CD14-positive monocyte (primary cell): ENCODE measurements at regions of chr11 and their contacts with region 1.

Region 1: GRCh38 chr11:61129639-61130523 is 27.6 kb downstream of the CD5 start:
- DNase-seq: peak; percentile 82 to 89 (median 88)
- H3K4me3 ChIP-seq: peak overlapping the region in 1 of 3 experiments; percentile 21
- H3K4me3 Mint-ChIP-seq: peak overlapping the region; percentile 52 to 58
- H3K27ac ChIP-seq: peak overlapping the region in 1 of 2 donors; percentile 65
- H3K27ac Mint-ChIP-seq: peak overlapping the region; percentile 4 to 86 (median 81)
- H3K4me1 ChIP-seq: peaks cover 6 to 13% of the 10 kb centered on the region in 2 donors
- H3K4me1 Mint-ChIP-seq: peaks cover 7% of the 10 kb centered on the region
- H3K27me3 ChIP-seq: no peaks in the 10 kb centered on the region
- H3K27me3 Mint-ChIP-seq: peaks cover 0 to 1% (median 0%) of the 10 kb centered on the region in 3 donors
- CTCF ChIP-seq: peak; percentile 100

Region 2: DNA sequence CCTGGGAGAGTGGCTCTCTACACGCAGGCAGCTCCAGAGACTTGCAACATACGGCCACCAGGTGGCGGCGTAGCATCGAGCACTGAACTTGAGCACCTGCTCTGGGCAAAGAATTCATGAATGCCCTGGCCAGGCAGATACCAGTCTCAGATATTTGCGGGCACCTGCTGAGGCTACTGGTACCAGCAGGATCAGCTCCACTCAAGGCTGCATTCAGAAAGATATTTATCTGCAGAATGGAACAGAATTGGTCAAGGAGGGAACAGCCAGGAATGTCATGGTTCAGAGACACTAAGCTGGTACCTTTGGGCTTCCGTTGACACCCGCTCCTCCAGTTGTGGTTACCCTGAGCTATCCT is 298.8 kb before region 1 on chr11:
- intact Hi-C with region 1: loop called in 1 of 2 experiments (anchors 10 kb)
- DNase-seq: peak; percentile 68 to 79 (median 75)
- H3K4me3 ChIP-seq: no peak overlapping the region
- H3K4me3 Mint-ChIP-seq: no peak overlapping the region
- H3K27ac ChIP-seq: no peak overlapping the region
- H3K27ac Mint-ChIP-seq: peak overlapping the region in 1 of 7 donors; percentile 65
- H3K4me1 ChIP-seq: peaks cover 23 to 27% of the 10 kb centered on the region in 2 donors
- H3K4me1 Mint-ChIP-seq: peaks cover 26% of the 10 kb centered on the region
- H3K27me3 ChIP-seq: peaks cover 0 to 2% of the 10 kb centered on the region in 2 donors
- H3K27me3 Mint-ChIP-seq: peaks cover 2 to 5% (median 3%) of the 10 kb centered on the region in 3 donors
- CTCF ChIP-seq: peak; percentile 91

Region 3: GRCh38 chr11:60970369-60970774 is 159.5 kb before region 1 on chr11:
- intact Hi-C with region 1: loop called in 1 of 2 experiments (anchors 1 kb)
- DNase-seq: peak; percentile 53 to 65 (median 60)
- H3K4me3 ChIP-seq: no peak overlapping the region
- H3K4me3 Mint-ChIP-seq: no peak overlapping the region
- H3K27ac ChIP-seq: no peak overlapping the region
- H3K27ac Mint-ChIP-seq: peak overlapping the region in 1 of 7 donors; percentile 32
- H3K4me1 ChIP-seq: peaks cover 0 to 10% of the 10 kb centered on the region in 2 donors
- H3K4me1 Mint-ChIP-seq: peaks cover 29% of the 10 kb centered on the region
- H3K27me3 ChIP-seq: peaks cover 3 to 19% of the 10 kb centered on the region in 2 donors
- H3K27me3 Mint-ChIP-seq: peaks cover 27 to 47% (median 31%) of the 10 kb centered on the region in 3 donors
- CTCF ChIP-seq: peak; percentile 96

Region 4: DNA sequence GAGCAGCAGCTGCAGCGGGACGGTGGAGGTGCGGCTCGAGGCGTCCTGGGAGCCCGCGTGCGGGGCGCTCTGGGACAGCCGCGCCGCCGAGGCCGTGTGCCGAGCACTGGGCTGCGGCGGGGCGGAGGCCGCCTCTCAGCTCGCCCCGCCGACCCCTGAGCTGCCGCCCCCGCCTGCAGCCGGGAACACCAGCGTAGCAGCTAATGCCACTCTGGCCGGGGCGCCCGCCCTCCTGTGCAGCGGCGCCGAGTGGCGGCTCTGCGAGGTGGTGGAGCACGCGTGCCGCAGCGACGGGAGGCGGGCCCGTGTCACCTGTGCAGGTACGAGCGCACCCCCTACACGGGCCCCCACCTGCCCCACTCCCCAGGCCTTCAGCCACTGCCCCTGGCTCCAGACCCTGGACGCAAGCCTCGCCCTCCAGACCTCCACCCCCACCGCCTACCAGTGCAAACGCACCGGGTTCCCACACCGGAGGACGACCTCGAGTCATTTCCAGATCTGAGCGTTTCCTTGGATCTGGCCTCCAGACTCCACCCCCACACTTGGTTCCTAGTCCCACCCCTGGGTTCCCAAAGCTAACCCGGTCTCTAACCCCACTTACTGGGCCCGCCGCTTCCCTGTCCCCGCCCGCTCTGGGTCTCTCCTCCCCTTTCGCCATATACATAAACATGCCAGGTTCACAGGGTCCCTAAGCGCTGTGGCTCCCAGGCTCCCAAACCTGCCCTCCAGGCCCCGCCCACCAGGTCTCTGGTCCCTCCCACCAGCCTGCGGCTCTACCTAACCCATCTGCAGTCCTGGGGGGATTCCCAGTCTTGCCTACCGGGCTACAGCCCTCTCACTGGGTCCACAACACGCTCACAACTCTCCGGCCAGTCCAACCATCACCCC is 122.0 kb before region 1 on chr11:
- intact Hi-C with region 1: no loop called
- DNase-seq: no peak
- H3K4me3 ChIP-seq: peak overlapping the region in 1 of 3 experiments; percentile 47
- H3K4me3 Mint-ChIP-seq: peak overlapping the region; percentile 49 to 84
- H3K27ac ChIP-seq: no peak overlapping the region
- H3K27ac Mint-ChIP-seq: no peak overlapping the region
- H3K4me1 ChIP-seq: peaks cover 21 to 25% of the 10 kb centered on the region in 2 donors
- H3K4me1 Mint-ChIP-seq: peaks cover 28% of the 10 kb centered on the region
- H3K27me3 ChIP-seq: peaks cover 17 to 30% of the 10 kb centered on the region in 2 donors
- H3K27me3 Mint-ChIP-seq: peaks cover 30 to 56% (median 35%) of the 10 kb centered on the region in 3 donors
- CTCF ChIP-seq: no peak

Region 5: DNA sequence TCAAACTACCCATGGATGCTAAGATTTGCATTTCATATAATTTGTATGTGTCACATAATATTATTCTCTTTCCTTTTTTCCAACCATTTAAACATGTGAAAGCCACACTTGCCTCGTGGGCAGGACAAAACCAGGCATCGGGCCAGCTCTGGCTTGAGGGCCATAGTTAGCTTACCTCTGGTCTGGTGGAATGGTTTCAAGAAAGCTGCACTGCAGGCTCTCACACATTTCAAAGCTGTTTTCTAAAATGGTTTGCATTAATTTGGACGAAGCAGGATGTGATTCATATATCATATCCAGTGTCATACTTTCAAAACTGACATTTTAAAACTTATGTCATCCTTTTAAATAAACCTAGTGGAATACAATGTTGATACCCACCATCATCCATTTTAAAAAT is 92.2 kb before region 1 on chr11:
- intact Hi-C with region 1: no loop called
- DNase-seq: no peak
- H3K4me3 ChIP-seq: no peak overlapping the region
- H3K4me3 Mint-ChIP-seq: no peak overlapping the region
- H3K27ac ChIP-seq: no peak overlapping the region
- H3K27ac Mint-ChIP-seq: peak overlapping the region in 1 of 7 donors; percentile 54
- H3K4me1 ChIP-seq: peaks cover 11 to 15% of the 10 kb centered on the region in 2 donors
- H3K4me1 Mint-ChIP-seq: peaks cover 17% of the 10 kb centered on the region
- H3K27me3 ChIP-seq: no peaks in the 10 kb centered on the region
- H3K27me3 Mint-ChIP-seq: peaks cover 8 to 10% (median 10%) of the 10 kb centered on the region in 3 donors
- CTCF ChIP-seq: no peak

Region 6: GRCh38 chr11:61089806-61090491 is 39.9 kb before region 1 on chr11:
- intact Hi-C with region 1: loop called in 1 of 2 experiments (anchors 5 kb)
- DNase-seq: no peak
- H3K4me3 ChIP-seq: no peak overlapping the region
- H3K4me3 Mint-ChIP-seq: no peak overlapping the region
- H3K27ac ChIP-seq: no peak overlapping the region
- H3K27ac Mint-ChIP-seq: peak overlapping the region in 1 of 7 donors; percentile 13
- H3K4me1 ChIP-seq: peaks cover 36 to 38% of the 10 kb centered on the region in 2 donors
- H3K4me1 Mint-ChIP-seq: peaks cover 38% of the 10 kb centered on the region
- H3K27me3 ChIP-seq: no peaks in the 10 kb centered on the region
- H3K27me3 Mint-ChIP-seq: peaks cover 0 to 2% (median 0%) of the 10 kb centered on the region in 3 donors
- CTCF ChIP-seq: no peak

Region 7: GRCh38 chr11:61187505-61188130 is 57.7 kb after region 1 on chr11:
- intact Hi-C with region 1: loop called (anchors 1 to 2 kb)
- DNase-seq: peak; percentile 72 to 87 (median 79)
- H3K4me3 ChIP-seq: no peak overlapping the region
- H3K4me3 Mint-ChIP-seq: no peak overlapping the region
- H3K27ac ChIP-seq: no peak overlapping the region
- H3K27ac Mint-ChIP-seq: peak overlapping the region in 3 of 7 donors; percentile 27 to 65 (median 63)
- H3K4me1 ChIP-seq: peaks cover 0 to 3% of the 10 kb centered on the region in 2 donors
- H3K4me1 Mint-ChIP-seq: peaks cover 16% of the 10 kb centered on the region
- H3K27me3 ChIP-seq: no peaks in the 10 kb centered on the region
- H3K27me3 Mint-ChIP-seq: peaks cover 0 to 1% (median 0%) of the 10 kb centered on the region in 3 donors
- CTCF ChIP-seq: peak; percentile 99

Region 8: DNA sequence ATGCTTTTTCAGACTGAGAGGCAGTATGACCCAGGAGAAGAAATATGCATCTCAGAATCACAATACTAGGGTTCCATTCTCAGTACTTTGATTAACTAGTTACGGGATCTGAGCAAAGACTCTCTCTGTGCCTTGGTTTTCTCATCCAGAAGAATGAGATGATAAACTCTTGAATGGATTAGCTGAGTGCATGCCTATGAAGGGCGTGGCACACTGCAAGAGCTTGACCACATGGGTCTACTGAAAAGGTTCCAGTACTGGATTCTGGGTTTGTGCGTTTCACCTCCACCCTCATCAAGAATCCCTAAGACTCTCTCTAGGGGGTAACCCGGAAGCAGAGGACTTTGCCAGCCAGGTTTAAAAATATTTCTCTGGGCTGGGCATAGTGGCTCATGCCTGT is 136.7 kb after region 1 on chr11:
- intact Hi-C with region 1: no loop called
- DNase-seq: no peak
- H3K4me3 ChIP-seq: no peak overlapping the region
- H3K4me3 Mint-ChIP-seq: no peak overlapping the region
- H3K27ac ChIP-seq: no peak overlapping the region
- H3K27ac Mint-ChIP-seq: no peak overlapping the region
- H3K4me1 ChIP-seq: no peaks in the 10 kb centered on the region
- H3K4me1 Mint-ChIP-seq: no peaks in the 10 kb centered on the region
- H3K27me3 ChIP-seq: no peaks in the 10 kb centered on the region
- H3K27me3 Mint-ChIP-seq: peaks cover 0 to 4% (median 3%) of the 10 kb centered on the region in 3 donors
- CTCF ChIP-seq: no peak